Prostate gland (tissue), 2 donors: ENCODE measurements at regions of chr1 and their contacts with region 1.

Region 1: DNA sequence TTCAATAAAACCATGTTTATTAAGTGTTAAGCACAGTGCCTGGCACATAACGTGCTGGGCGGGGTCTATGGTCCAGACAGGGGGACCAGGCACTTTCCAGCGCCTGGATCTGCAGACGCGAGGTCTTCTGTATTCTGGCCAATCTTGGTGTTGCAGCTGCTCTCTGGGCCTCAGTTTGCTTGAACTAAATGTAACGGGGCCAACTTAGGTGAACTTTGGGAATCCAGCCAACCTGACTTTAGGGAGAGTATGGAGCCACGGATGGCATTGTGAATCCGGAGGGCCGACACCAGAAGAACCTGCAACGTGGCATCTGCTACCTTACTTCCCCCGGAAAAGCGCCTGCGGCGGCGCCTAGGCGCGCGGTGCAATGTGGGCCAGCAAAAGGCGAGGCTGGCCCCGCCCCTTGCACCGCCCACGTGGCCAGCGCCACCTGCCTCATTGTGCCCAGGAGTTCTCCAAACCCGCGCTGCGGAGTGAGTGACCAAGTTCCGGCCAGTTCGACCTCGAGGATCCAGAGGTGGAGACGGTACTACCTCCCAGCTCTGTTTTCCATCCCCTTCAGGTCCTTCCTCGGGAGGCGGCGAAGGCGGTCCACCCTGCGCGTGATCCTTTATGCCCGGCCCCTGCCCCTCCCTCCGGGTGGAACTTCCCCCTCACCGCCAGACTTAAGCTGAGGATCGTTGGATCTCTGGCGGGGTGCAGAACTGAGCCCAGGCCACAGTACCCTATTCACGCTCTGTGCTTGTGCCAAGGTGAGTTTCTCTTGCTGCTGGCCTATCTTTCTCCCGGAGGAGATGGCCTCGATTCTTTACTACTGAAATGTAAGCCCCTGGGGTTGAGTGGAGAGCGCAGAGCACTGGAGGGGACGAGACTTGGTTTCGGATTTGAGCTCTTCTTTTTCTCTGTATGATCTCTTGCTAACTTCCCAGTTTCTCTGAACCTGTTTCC is at the start of gene AKR1A1:
- DNase-seq: peak; percentile 84
- H3K4me3 ChIP-seq: peak within 1 kb of the TSS; percentile 47 to 60
- H3K27ac ChIP-seq: peak within 1 kb of the TSS; percentile 80 to 90
- H3K4me1 ChIP-seq: no peaks in the 10 kb centered on the region
- H3K27me3 ChIP-seq: no peaks in the 10 kb centered on the region
- CTCF ChIP-seq: peak in 2 of 4 experiments; percentile 0 to 12
- POLR2A ChIP-seq: peak; percentile 40
- total RNA-seq, gene AKR1A1: 49.7 to 132 TPM

Region 2: DNA sequence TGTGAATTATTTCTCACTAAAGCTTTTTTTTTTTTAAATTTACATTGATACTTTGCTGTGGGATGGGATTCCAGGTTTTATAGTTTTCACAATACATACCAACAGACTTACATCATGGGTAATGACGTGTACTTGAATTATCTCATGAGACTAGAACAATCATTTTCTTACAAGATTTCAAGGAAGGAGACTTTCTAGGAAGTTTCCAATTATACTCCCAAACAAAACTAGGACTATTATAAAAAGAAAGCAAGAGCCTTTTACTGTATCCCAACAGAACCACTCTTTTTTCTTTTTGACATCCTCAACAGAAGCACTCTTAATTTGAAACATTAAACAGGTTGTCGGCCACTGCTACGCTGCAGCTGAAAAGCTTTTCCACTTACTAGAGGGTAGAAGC is 108.4 kb before region 1 on chr1:
- intact Hi-C with region 1: no loop called
- DNase-seq: no peak
- H3K4me3 ChIP-seq: no peak overlapping the region
- H3K27ac ChIP-seq: no peak overlapping the region
- H3K4me1 ChIP-seq: peaks cover 4% of the 10 kb centered on the region
- H3K27me3 ChIP-seq: no peaks in the 10 kb centered on the region
- CTCF ChIP-seq: no peak
- POLR2A ChIP-seq: no peak

Region 3: GRCh38 chr1:45521398-45522323 is 29.0 kb before region 1 on chr1 and contains the start of gene PRDX1:
- intact Hi-C with region 1: loop called (anchors 2 kb)
- DNase-seq: peak; percentile 98
- H3K4me3 ChIP-seq: peak within 1 kb of the TSS; percentile 93 to 95
- H3K27ac ChIP-seq: peak within 1 kb of the TSS; percentile 95 to 97
- H3K4me1 ChIP-seq: no peaks in the 10 kb centered on the region
- H3K27me3 ChIP-seq: no peaks in the 10 kb centered on the region
- CTCF ChIP-seq: peak in 1 of 4 experiments; percentile 43
- POLR2A ChIP-seq: peak; percentile 98
- total RNA-seq, gene PRDX1: 210 to 335 TPM

Region 4: GRCh38 chr1:45809761-45810160 is 259.1 kb after region 1 on chr1:
- intact Hi-C with region 1: no loop called
- DNase-seq: no peak
- H3K4me3 ChIP-seq: no peak overlapping the region
- H3K27ac ChIP-seq: no peak overlapping the region
- H3K4me1 ChIP-seq: no peaks in the 10 kb centered on the region
- H3K27me3 ChIP-seq: no peaks in the 10 kb centered on the region
- CTCF ChIP-seq: no peak
- POLR2A ChIP-seq: no peak

Region 5: GRCh38 chr1:45922374-45922773 is 371.7 kb after region 1 on chr1:
- intact Hi-C with region 1: no loop called
- DNase-seq: no peak
- H3K4me3 ChIP-seq: no peak overlapping the region
- H3K27ac ChIP-seq: no peak overlapping the region
- H3K4me1 ChIP-seq: no peaks in the 10 kb centered on the region
- H3K27me3 ChIP-seq: no peaks in the 10 kb centered on the region
- CTCF ChIP-seq: no peak
- POLR2A ChIP-seq: no peak

Region 6: DNA sequence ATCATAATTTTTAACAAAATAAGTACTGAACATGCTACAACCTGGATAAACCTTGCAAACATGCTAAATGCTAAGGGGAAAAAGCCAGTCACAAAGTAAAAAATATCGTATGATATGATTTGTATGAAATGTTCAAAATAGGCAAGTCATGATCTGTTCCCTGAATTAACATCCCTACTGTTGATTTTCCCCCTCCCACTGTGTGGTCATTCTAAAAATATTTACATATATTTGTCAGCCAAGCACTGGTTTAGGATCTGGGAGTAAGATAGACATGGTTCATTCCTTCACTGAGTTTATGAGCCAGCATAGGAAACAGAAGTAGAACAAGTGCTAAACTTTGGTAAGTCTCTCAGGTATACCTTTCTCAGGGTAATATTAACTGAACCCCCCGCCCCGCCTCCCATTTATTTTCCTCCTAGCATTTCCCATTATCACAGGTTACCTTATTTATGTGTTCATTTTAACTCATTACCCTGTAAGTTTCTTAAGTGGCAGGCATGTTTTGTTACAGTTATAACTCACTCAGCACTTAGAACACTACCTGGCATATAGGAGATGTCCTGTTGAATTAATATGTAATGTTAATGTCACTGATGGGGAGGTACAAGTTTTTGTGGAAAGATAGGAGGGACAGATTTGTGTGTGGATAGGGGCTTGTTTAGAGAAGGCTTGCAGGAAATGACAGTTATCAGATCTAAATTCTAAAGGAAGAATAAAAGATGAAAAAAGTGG is 765.2 kb after region 1 on chr1:
- intact Hi-C with region 1: no loop called
- DNase-seq: no peak
- H3K4me3 ChIP-seq: no peak overlapping the region
- H3K27ac ChIP-seq: no peak overlapping the region
- H3K4me1 ChIP-seq: no peaks in the 10 kb centered on the region
- H3K27me3 ChIP-seq: no peaks in the 10 kb centered on the region
- CTCF ChIP-seq: no peak
- POLR2A ChIP-seq: no peak